BJ (cell line): ENCODE measurements at regions of chr18 and their contacts with region 1.

Region 1: GRCh38 chr18:58529714-58530354 is 99.1 kb downstream of the ALPK2 start:
- DNase-seq: no peak
- H3K4me3 ChIP-seq: no peak overlapping the region
- H3K27me3 ChIP-seq: no peaks in the 10 kb centered on the region
- CTCF ChIP-seq: peak; percentile 76

Region 2: GRCh38 chr18:57376503-57376902 is 1153.3 kb before region 1 on chr18:
- CTCF ChIA-PET with region 1: no interaction called
- POLR2A ChIA-PET with region 1: no interaction called
- DNase-seq: no peak
- H3K4me3 ChIP-seq: no peak overlapping the region
- H3K27me3 ChIP-seq: no peaks in the 10 kb centered on the region
- CTCF ChIP-seq: no peak

Region 3: DNA sequence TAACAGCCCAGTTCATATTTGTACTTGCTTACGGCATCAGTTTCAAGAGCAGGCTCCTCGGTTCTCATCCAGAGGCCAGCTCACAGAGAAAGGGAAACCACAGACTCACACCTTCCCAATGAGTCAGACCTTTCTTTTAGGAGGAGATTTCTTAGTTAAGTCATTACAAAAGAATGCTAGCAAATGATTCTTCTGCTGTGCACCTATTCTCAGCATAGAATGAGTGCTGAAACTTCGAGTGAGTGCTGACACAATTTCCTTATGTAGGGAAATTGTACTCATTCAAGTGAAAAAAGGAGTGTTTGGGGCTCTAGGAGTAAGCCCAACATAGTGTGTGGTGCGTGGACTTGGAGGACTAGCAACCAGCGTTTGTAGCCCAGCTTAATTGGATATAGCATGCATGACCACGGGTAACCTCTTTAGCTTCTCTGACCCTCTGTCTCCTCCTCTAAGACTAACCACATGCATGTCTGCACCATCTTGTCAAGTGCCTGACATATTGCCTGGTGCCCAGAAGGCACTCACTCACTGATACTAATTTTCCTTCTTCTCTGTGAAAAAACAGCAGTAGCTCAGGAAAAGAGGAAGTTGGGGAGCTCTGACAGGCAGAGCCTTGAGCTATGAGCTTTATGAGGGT is 12.1 kb after region 1 on chr18:
- CTCF ChIA-PET with region 1: interaction called, 23 read pairs
- POLR2A ChIA-PET with region 1: no interaction called
- DNase-seq: peak; percentile 94
- H3K4me3 ChIP-seq: no peak overlapping the region
- H3K27me3 ChIP-seq: no peaks in the 10 kb centered on the region
- CTCF ChIP-seq: no peak

Region 4: DNA sequence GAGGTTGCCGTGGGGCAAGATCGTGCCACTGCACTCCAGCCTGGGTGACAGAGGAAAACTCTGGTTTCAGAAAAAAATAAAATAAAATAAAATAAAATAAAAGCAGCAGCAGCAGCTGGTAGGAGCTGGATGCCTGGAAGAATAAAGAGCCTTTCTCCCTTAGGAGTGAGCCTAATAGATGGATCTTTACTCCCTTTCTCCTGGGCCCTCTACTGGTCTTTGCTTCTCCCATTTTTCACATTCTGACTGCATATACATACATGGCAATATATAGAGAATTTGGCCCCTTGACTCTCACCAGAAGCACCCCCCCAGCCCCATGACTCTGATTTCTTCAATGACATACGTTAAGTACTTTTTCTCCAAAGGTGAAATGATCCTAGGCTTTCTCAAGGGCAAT is 131.6 kb after region 1 on chr18:
- CTCF ChIA-PET with region 1: interaction called, 11 read pairs
- POLR2A ChIA-PET with region 1: no interaction called
- DNase-seq: no peak
- H3K4me3 ChIP-seq: no peak overlapping the region
- H3K27me3 ChIP-seq: no peaks in the 10 kb centered on the region
- CTCF ChIP-seq: peak; percentile 56

Region 5: DNA sequence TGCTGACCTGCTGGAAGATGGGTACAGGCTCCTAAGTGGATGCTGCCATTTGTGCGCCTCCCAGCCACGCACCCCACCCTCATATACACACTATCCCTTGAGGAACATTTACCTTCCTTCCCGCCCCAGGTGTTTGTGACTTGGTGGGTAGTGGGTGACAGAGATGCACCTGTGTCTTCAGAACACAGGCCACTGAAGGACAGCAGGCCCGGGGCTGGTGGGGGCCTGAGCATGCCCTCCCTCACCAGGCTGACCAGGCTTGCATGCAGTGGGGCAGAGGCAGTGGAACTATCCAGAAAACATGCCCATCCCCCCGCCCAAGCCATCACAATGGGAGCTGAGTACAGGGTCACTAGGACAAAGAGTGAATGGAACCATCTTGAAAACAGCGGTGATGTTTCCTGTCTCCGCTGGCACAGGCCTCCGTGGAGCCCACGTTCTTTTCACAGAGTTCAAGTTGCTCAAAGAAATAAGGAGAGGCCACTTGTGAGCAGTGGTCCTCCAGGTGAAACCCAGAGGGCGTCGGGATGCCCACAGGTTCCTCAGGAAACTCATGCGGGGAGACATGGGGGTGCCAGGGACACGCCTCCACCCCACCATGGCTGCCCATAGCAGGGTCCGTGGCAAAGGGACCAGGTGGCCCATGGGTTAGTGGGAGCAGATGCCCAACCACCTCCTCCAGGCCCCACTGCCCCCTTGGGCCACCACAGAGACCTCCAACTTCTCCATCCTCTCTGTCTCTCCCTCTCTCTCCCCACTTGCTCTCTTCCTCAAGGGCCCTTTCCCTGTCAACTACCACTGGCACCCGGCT is 232.3 kb after region 1 on chr18:
- CTCF ChIA-PET with region 1: interaction called, 89 read pairs
- POLR2A ChIA-PET with region 1: no interaction called
- DNase-seq: no peak
- H3K4me3 ChIP-seq: no peak overlapping the region
- H3K27me3 ChIP-seq: no peaks in the 10 kb centered on the region; the same call in none of the 2 replicates
- CTCF ChIP-seq: no peak